ENCODE measurements at regions of chr6 and their contacts with region 1.

Region 1: GRCh38 chr6:113221850-113222249 is 635.3 kb upstream of the MARCKS start:
- DNase-seq: no peak
- H3K4me3 ChIP-seq: no peak overlapping the region
- H3K27ac ChIP-seq: no peak overlapping the region
- H3K27me3 ChIP-seq: no peaks in the 10 kb centered on the region
- CTCF ChIP-seq: no peak

Region 2: DNA sequence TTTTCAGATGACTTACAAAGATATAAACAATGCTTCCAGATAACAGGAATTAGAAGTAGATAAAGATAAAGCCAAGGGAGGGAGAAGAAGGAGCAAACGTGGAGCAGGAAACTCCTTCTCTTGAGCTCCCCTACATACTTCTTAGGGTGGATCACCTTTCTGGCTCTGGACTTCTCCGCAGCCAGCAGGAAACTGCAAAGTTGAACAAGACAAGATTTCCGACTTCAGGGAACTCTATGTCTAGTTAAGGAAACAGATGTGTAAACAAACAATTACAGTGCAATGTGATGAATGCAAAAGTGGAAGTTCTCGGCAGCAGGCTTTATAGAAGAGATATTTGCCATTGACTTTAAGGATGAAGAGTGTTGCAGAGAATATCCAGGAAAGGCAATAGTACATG is 501.3 kb after region 1 on chr6:
- CTCF ChIA-PET with region 1: no interaction called
- POLR2A ChIA-PET with region 1: interaction called, 10 read pairs
- DNase-seq: no peak
- H3K4me3 ChIP-seq: no peak overlapping the region
- H3K27ac ChIP-seq: no peak overlapping the region
- H3K27me3 ChIP-seq: no peaks in the 10 kb centered on the region
- CTCF ChIP-seq: no peak